ENCODE measurements at regions of chr11 and their contacts with region 1.

Region 1: DNA sequence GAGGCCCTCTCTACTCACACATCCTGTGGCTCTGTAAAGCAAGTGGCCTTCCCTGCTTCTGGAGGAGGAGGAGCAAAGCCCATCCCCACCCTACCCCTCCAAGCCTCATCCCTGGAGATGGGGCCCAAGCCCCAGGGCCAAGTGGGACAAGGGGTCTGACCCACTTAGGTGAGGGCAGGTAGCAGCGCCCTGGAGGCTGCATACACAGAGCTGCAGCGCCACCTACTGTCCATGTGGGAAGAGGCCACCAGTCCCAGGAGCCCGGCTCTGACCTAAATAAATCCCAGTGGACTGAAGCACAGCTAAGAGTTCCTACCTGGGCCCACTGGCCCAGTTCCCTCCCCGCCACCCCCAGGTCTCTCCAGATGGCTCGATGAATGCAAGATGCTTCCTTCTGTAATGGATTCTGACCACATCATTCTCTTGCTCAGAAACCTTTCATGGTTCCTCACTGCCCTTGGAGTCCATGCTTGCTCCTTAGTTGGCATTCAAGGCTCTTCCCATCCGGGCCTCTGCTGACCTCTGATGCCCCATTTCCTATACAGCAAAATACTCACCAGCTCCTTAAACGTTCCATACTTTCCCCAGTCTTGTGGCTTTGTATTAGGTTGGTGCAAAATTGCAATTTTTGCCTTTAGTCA is 62.1 kb downstream of the THAP12 start:
- DNase-seq: peak; percentile 78
- H3K4me3 ChIP-seq: no peak overlapping the region
- H3K27ac ChIP-seq: no peak overlapping the region
- H3K4me1 ChIP-seq: no peaks in the 10 kb centered on the region
- H3K27me3 ChIP-seq: no peaks in the 10 kb centered on the region
- CTCF ChIP-seq: peak; percentile 55 to 94 (median 90)
- POLR2A ChIP-seq: no peak

Region 2: GRCh38 chr11:75797792-75798191 is 521.1 kb before region 1 on chr11:
- intact Hi-C with region 1: loop called (anchors 10 kb)
- DNase-seq: no peak
- H3K4me3 ChIP-seq: no peak overlapping the region
- H3K27ac ChIP-seq: no peak overlapping the region
- H3K4me1 ChIP-seq: no peaks in the 10 kb centered on the region
- H3K27me3 ChIP-seq: no peaks in the 10 kb centered on the region
- CTCF ChIP-seq: no peak
- POLR2A ChIP-seq: no peak

Region 3: GRCh38 chr11:76161261-76161961 is 157.5 kb before region 1 on chr11:
- intact Hi-C with region 1: loop called (anchors 5 kb)
- DNase-seq: no peak
- H3K4me3 ChIP-seq: no peak overlapping the region
- H3K27ac ChIP-seq: no peak overlapping the region
- H3K4me1 ChIP-seq: no peaks in the 10 kb centered on the region
- H3K27me3 ChIP-seq: no peaks in the 10 kb centered on the region
- CTCF ChIP-seq: no peak
- POLR2A ChIP-seq: no peak

Region 4: GRCh38 chr11:76232026-76232665 is 86.7 kb before region 1 on chr11:
- intact Hi-C with region 1: no loop called
- DNase-seq: no peak
- H3K4me3 ChIP-seq: no peak overlapping the region
- H3K27ac ChIP-seq: no peak overlapping the region
- H3K4me1 ChIP-seq: no peaks in the 10 kb centered on the region
- H3K27me3 ChIP-seq: no peaks in the 10 kb centered on the region
- CTCF ChIP-seq: no peak
- POLR2A ChIP-seq: no peak

Measured in prostate gland (tissue), 2 donors.